Kidney (tissue), 22 donors: ENCODE measurements at regions of chr2 and their contacts with region 1.

Region 1: GRCh38 chr2:85635636-85636035 is 19.6 kb downstream of the USP39 start:
- DNase-seq: no peak
- H3K4me3 ChIP-seq: no peak overlapping the region
- H3K27ac ChIP-seq: no peak overlapping the region
- H3K4me1 ChIP-seq: no peaks in the 10 kb centered on the region
- H3K27me3 ChIP-seq: no peaks in the 10 kb centered on the region
- CTCF ChIP-seq: no peak

Region 2: DNA sequence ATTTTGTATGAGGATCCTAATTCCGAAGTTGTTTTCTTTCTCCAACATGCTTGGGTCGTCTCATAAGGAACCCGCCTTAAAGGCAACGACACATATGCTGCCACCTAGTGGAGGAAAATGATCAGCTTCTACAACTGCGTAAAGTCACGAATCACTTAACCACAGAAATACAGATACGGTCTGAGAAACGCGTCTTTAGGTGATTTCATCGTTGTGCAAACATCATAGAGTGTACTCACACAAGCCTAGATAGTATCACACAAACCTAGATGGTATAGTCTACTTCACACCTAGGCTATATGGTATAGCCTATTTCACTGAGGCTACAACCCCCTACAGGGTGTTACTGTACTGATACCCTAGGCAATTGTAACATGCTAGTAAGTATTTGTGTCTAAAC is 71.7 kb after region 1 on chr2:
- intact Hi-C with region 1: loop called (anchors 10 kb)
- DNase-seq: peak in 3 of 5 donors; percentile 54 to 90 (median 85)
- H3K4me3 ChIP-seq: no peak overlapping the region
- H3K27ac ChIP-seq: no peak overlapping the region
- H3K4me1 ChIP-seq: peaks cover 0 to 13% (median 6%) of the 10 kb centered on the region in 3 donors
- H3K27me3 ChIP-seq: no peaks in the 10 kb centered on the region
- CTCF ChIP-seq: peak; percentile 84

Region 3: DNA sequence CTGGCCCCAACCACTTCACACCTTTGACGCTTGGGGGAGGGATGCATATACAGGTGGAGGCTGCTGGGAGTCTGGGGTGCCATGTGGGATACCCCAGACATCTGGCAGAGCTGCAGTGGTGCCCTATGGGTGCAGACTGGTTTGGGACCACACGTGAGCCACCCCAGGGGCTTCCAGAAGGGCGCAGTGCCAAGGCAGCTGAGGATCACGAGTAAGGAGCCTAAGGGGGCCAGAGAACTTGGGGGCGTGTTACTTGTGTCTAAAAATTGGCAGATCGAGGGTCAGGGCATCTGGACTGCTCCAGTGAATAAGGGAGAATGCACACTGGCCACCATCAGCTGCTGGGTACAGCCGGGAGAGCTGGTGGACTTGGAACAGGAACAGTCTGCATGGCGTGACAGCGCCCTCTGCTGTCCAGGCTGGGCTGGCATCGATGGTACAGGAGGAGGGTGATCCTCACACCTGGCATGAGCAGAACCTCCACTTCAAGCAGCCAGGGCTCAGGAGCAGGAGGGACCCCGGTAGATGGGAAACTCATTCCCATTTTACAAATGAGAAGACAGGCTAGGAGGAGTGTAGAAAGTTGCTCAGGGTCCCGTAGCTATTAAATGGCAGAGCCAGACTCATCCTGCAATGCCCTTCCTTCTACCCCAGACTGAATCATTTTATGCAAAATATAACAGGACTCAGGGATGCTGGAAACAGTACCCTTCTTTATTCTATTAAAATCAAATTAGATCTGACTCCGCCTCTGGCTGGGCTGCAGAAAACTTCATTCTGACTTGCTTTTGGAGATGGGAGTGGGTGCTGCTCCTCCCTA is 178.6 kb after region 1 on chr2:
- intact Hi-C with region 1: loop called (anchors 10 kb)
- DNase-seq: peak; percentile 91 to 94 (median 93)
- H3K4me3 ChIP-seq: no peak overlapping the region
- H3K27ac ChIP-seq: no peak overlapping the region
- H3K4me1 ChIP-seq: peaks cover 0 to 4% (median 3%) of the 10 kb centered on the region in 3 donors
- H3K27me3 ChIP-seq: no peaks in the 10 kb centered on the region
- CTCF ChIP-seq: peak; percentile 99